HEK293 (cell line): ENCODE measurements at regions of chr7 and their contacts with region 1.

Region 1: DNA sequence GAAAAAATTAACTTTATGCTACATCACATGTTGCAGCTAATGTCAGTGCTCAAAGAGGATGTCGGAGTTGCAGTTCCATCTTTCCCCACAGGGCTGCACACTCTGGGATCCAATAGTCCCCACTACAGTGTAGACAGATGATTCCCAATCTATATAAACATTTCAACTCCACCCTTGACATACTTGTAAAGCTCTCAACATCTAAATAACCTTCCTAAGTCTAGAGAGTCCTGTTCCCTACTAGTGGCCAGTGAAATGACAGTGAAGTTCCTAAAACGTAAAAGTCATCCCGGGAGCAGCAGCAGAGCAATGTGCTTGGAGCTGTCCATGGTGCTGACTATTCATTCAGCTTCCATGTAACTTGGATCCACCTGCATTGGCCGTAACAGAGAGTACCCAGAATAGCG is 145.1 kb downstream of the GRM8 start:
- H3K4me3 ChIP-seq: no peak overlapping the region
- H3K27ac ChIP-seq: no peak overlapping the region
- H3K4me1 ChIP-seq: no peaks in the 10 kb centered on the region
- CTCF ChIP-seq: no peak; the same call in 1 of the 2 replicates

Region 2: DNA sequence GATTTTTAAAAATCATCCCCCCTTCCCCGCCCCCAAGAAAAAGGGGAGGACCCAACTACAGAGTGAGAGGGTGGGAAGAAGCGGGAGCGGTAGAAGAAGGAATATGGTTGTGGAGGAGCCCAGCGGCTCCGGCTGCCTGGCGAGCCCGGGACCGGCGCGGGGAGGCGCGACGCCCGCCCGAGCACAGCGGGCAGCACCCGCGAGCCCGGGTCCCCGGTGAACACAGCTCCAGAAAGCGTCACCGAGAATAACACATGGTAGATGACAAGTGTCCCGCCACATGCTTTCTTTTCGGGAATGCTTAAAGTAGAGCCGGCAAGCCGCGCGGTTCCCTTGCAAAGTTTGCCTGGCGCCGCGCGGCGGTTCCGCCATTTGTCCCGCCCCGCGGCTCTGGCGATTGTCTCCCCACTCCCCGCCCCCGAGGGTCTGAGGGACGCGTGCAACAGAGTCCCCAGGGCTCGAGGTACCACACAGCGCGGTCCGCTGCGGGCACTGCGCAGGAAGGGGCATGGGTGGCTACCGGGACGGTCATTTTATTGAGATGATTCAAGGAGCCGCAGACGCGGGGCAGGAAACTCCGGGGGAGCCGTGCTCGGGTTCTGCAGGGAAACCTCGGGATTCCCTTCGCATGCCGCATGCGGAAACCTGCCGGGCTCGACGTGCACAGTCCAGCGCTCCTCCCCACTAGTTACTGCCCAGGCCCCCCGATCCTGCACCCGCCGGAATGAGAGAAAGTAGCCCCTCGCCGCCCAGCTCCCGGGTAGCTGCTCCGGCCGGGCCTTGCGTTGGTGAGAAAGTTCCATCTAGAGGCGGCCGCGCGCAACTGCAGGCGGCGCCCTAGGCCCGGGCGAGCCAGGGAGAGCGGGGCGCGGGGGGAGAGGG is 145.9 kb after region 1 on chr7:
- CTCF ChIA-PET with region 1: interaction called, 10 read pairs
- POLR2A ChIA-PET with region 1: no interaction called
- H3K4me3 ChIP-seq: peak overlapping the region; percentile 67
- H3K27ac ChIP-seq: peak overlapping the region; percentile 63
- H3K4me1 ChIP-seq: no peaks in the 10 kb centered on the region
- CTCF ChIP-seq: peak; percentile 68; the same call in 1 of the 2 replicates